ENCODE measurements at regions of chr11 and their contacts with region 1.

Region 1: DNA sequence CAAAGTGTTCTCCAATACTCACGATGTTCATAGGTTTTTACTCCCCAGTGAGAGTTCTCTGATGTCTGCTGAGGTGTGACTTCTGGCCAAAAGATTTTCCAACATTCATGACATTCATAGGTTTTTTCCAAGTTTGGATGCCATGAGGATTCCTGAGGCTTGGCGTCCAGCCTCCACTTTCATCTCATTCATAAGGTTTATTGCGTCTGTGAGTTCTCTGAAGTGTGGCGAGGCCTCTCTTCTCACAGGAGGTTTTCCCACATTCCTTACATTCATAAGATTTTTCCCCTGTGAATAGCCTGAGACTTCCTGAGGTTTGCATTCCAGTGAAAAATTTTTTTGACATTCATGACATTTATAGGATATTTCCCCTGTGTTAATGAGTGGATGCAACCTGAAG is 1014.1 kb downstream of the LRRC4C start:
- DNase-seq: no peak
- ATAC-seq: no peak
- H3K4me3 ChIP-seq: no peak overlapping the region
- H3K27ac ChIP-seq: no peak overlapping the region
- H3K4me1 ChIP-seq: no peaks in the 10 kb centered on the region
- H3K27me3 ChIP-seq: no peaks in the 10 kb centered on the region
- CTCF ChIP-seq: no peak
- POLR2A ChIP-seq: no peak

Region 2: DNA sequence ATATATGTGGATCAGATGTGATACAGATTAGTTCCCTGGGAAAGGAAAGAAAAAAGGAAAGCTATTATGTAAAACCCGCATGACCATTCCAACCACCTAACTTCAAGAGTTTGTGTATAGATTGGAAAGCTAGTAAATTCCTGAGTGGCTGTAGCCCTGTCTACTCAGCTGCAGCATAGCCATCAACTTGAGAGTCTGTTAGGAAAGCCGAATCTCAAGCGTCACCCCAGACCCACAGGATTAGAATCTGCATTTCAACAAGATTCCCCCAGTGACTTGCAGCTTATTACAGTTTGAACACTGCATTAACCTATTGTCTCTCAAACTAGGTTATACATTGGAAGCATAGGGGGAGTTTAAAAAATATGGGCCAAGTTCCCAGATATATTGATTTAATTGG is 92.3 kb after region 1 on chr11:
- in situ Hi-C with region 1: loop called in 1 of 4 experiments (anchors 25 kb)
- intact Hi-C with region 1: no loop called
- DNase-seq: no peak
- ATAC-seq: no peak
- H3K4me3 ChIP-seq: no peak overlapping the region
- H3K27ac ChIP-seq: no peak overlapping the region
- H3K4me1 ChIP-seq: no peaks in the 10 kb centered on the region
- H3K27me3 ChIP-seq: no peaks in the 10 kb centered on the region
- CTCF ChIP-seq: no peak
- POLR2A ChIP-seq: no peak